Natural killer cell (primary cell): ENCODE measurements at regions of chr3 and their contacts with region 1.

Region 1: GRCh38 chr3:39107388-39108199 is at the starts of genes GORASP1 and TTC21A:
- DNase-seq: peak; percentile 57 to 80
- ATAC-seq: peak; percentile 68 to 69 (median 68)
- H3K4me3 ChIP-seq: peak within 1 kb of the TSS; percentile 73
- H3K4me3 Mint-ChIP-seq: peak within 1 kb of the TSS; percentile 95
- H3K27ac ChIP-seq: peak within 1 kb of the TSS; percentile 52
- H3K27ac Mint-ChIP-seq: peak within 1 kb of the TSS; percentile 76 to 85
- H3K4me1 ChIP-seq: peaks cover 28% of the 10 kb centered on the region
- H3K4me1 Mint-ChIP-seq: peaks cover 42 to 47% of the 10 kb centered on the region in 2 donors
- H3K27me3 ChIP-seq: no peaks in the 10 kb centered on the region
- H3K27me3 Mint-ChIP-seq: peaks cover 23 to 52% of the 10 kb centered on the region in 2 donors
- CTCF ChIP-seq: no peak
- total RNA-seq, gene GORASP1: 20.2 to 21.3 (median 20.8) TPM
- total RNA-seq, gene TTC21A: 2.1 to 3.9 (median 2.4) TPM

Region 2: GRCh38 chr3:39180546-39181346 is 73.2 kb after region 1 on chr3:
- intact Hi-C with region 1: loop called (anchors 10 kb)
- DNase-seq: peak; percentile 77 to 95
- ATAC-seq: peak; percentile 81 to 90 (median 87)
- H3K4me3 ChIP-seq: peak overlapping the region; percentile 18
- H3K4me3 Mint-ChIP-seq: peak overlapping the region; percentile 84
- H3K27ac ChIP-seq: peak overlapping the region; percentile 43
- H3K27ac Mint-ChIP-seq: peak overlapping the region; percentile 17 to 91
- H3K4me1 ChIP-seq: peaks cover 26% of the 10 kb centered on the region
- H3K4me1 Mint-ChIP-seq: peaks cover 27 to 39% of the 10 kb centered on the region in 2 donors
- H3K27me3 ChIP-seq: no peaks in the 10 kb centered on the region
- H3K27me3 Mint-ChIP-seq: peaks cover 0 to 8% of the 10 kb centered on the region in 2 donors
- CTCF ChIP-seq: no peak